ENCODE measurements at regions of chr2 and their contacts with region 1.

Region 1: GRCh38 chr2:64488050-64488974 is 34.4 kb downstream of the LGALSL start:
- DNase-seq: peak; percentile 71 to 73
- ATAC-seq: peak; percentile 60 to 91; a peak in 4 of 6 replicates
- H3K4me3 ChIP-seq: no peak overlapping the region
- H3K27ac ChIP-seq: no peak overlapping the region
- H3K4me1 ChIP-seq: no peaks in the 10 kb centered on the region
- CTCF ChIP-seq: peak; percentile 99
- EP300 ChIP-seq: no peak
- POLR2A ChIP-seq: no peak
- RAD21 ChIP-seq: peak; percentile 85 to 89

Region 2: DNA sequence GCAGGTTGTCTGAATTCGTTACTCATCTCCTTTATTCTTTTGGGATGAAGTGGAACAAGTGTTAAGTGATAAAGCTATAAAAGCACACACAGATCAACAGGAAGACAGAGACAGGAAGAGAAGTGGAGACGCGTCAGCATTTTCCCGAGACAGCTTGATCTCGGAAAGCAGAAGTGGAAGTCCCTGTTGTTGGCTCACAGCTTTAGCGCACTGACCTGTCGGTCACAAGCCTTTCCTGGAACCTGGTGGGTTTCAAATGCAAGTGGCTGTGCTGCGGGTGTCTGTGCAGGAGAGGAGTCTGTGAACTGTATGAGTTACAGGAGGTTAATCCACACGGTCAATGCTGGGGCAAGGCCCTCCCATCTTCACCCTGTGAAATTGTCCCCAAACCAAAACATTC is 227.5 kb before region 1 on chr2:
- CTCF ChIA-PET with region 1: no interaction called
- POLR2A ChIA-PET with region 1: no interaction called
- DNase-seq: no peak
- ATAC-seq: no peak
- H3K4me3 ChIP-seq: no peak overlapping the region
- H3K27ac ChIP-seq: no peak overlapping the region
- H3K4me1 ChIP-seq: 0 out of 3 replicates have a peak, but pooled peaks cover 9% of the 10 kb centered on the region
- CTCF ChIP-seq: no peak
- EP300 ChIP-seq: no peak
- POLR2A ChIP-seq: no peak
- RAD21 ChIP-seq: no peak

Region 3: GRCh38 chr2:64318476-64318748 is 169.9 kb before region 1 on chr2:
- CTCF ChIA-PET with region 1: interaction called, 533 read pairs
- POLR2A ChIA-PET with region 1: no interaction called
- DNase-seq: no peak
- ATAC-seq: no peak
- H3K4me3 ChIP-seq: no peak overlapping the region
- H3K27ac ChIP-seq: no peak overlapping the region
- H3K4me1 ChIP-seq: no peaks in the 10 kb centered on the region
- CTCF ChIP-seq: no peak
- EP300 ChIP-seq: no peak
- POLR2A ChIP-seq: no peak
- RAD21 ChIP-seq: no peak

Region 4: GRCh38 chr2:64354857-64355680 is 133.2 kb before region 1 on chr2:
- CTCF ChIA-PET with region 1: interaction called, 23 read pairs
- POLR2A ChIA-PET with region 1: no interaction called
- DNase-seq: peak; percentile 70 to 86
- ATAC-seq: peak; percentile 58 to 72; a peak in 4 of 6 replicates
- H3K4me3 ChIP-seq: no peak overlapping the region
- H3K27ac ChIP-seq: 0 out of 6 replicates have a peak overlapping the region, but pooled peaks of 1 of the 2 experiments have one; percentile 0
- H3K4me1 ChIP-seq: peaks cover 17% of the 10 kb centered on the region
- CTCF ChIP-seq: no peak
- EP300 ChIP-seq: no peak
- POLR2A ChIP-seq: no peak
- RAD21 ChIP-seq: no peak

Region 5: DNA sequence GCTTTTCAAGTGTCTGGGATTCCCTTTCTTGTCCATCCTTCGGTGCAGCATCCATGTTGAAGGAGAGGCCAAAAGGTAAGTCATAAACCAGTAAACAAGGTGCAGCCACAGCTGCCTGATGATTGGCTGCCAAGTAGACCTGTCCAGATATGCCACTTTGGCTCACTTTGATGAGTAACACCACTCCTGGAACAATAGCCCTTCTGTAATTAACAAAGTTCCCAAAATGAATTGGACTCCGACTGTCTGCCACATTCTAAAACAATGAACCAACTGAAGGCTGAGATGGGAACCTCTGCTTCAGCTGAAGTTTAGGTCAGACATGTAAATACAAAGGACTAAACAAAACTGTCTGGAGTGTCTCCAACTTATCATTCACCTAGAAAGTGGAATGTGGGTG is 116.6 kb before region 1 on chr2:
- CTCF ChIA-PET with region 1: no interaction called
- POLR2A ChIA-PET with region 1: no interaction called
- DNase-seq: no peak
- ATAC-seq: no peak
- H3K4me3 ChIP-seq: no peak overlapping the region
- H3K27ac ChIP-seq: no peak overlapping the region
- H3K4me1 ChIP-seq: no peaks in the 10 kb centered on the region
- CTCF ChIP-seq: no peak
- EP300 ChIP-seq: no peak
- POLR2A ChIP-seq: no peak
- RAD21 ChIP-seq: no peak

Region 6: GRCh38 chr2:64453770-64454385 is 34.4 kb before region 1 on chr2 and contains the start of gene LGALSL:
- CTCF ChIA-PET with region 1: interaction called, 13 read pairs
- POLR2A ChIA-PET with region 1: no interaction called
- DNase-seq: peak; percentile 76 to 78
- ATAC-seq: peak; percentile 88 to 92
- H3K4me3 ChIP-seq: peak within 1 kb of the TSS; percentile 85
- H3K27ac ChIP-seq: peak within 1 kb of the TSS; percentile 94 to 96
- H3K4me1 ChIP-seq: peaks cover 17% of the 10 kb centered on the region
- CTCF ChIP-seq: no peak
- EP300 ChIP-seq: no peak
- POLR2A ChIP-seq: no peak
- RAD21 ChIP-seq: no peak
- polyA plus RNA-seq, gene LGALSL: 12.7 and 14.1 TPM in 2 replicates

Region 7: DNA sequence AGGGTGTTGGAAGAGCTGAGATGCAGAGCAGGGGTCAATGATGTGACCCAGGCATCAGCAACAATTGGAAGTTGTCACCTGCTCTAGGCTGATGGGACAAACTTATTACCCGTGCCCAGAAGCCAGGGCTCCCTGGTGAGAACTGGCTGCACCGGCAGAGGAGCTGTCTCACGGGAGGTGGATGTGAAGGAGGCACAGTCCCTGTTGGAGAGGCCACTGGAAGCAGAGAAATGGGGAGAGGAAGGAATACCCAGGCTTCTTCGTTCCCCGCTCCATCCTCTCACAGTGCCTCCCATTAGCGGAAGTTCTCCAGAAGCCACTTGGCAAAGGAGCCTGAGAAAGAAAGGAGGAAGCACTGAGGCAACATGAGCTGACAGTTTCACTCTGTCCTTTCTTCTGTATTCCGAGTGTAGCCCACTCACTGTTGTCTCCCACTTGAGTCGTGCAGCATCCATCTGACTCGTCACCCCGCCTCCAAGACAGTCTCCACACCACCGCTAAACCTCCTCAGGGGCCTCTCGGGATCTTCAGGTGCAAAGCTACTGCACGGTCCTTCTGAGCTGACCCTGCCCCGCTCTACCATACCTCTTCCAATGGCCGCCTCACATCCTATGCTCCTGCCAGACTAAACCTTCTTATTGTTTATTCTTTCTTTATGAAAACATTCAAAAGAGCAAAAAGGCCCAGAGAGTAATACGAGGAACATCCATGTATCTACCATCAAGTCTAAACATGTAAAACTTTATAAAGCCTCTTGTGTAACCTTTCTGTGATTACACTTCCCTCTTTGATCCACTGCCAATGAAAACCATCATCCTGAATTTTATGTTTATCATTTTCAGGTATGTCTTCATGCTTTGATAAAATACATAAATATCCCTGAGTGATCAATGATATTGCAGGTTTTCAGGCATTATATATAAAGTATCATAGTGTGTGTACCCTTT is 16.7 kb after region 1 on chr2:
- CTCF ChIA-PET with region 1: interaction called, 112 read pairs
- POLR2A ChIA-PET with region 1: no interaction called
- DNase-seq: no peak
- ATAC-seq: no peak
- H3K4me3 ChIP-seq: no peak overlapping the region
- H3K27ac ChIP-seq: no peak overlapping the region
- H3K4me1 ChIP-seq: no peaks in the 10 kb centered on the region
- CTCF ChIP-seq: no peak
- EP300 ChIP-seq: no peak
- POLR2A ChIP-seq: no peak
- RAD21 ChIP-seq: no peak

Region 8: GRCh38 chr2:64807417-64807816 is 319.1 kb after region 1 on chr2:
- CTCF ChIA-PET with region 1: no interaction called
- POLR2A ChIA-PET with region 1: no interaction called
- DNase-seq: peak; percentile 41 to 84
- ATAC-seq: peak; percentile 92 to 93
- H3K4me3 ChIP-seq: no peak overlapping the region
- H3K27ac ChIP-seq: peak overlapping the region in 1 of 2 experiments; percentile 51; a peak in 2 of 6 replicates
- H3K4me1 ChIP-seq: peaks cover 9% of the 10 kb centered on the region; the same call in 1 of the 3 replicates
- CTCF ChIP-seq: no peak
- EP300 ChIP-seq: no peak
- POLR2A ChIP-seq: no peak
- RAD21 ChIP-seq: peak in 1 of 2 experiments; percentile 17; a peak in 1 of 5 replicates